ENCODE measurements at regions of chr11 and their contacts with region 1.

Region 1: DNA sequence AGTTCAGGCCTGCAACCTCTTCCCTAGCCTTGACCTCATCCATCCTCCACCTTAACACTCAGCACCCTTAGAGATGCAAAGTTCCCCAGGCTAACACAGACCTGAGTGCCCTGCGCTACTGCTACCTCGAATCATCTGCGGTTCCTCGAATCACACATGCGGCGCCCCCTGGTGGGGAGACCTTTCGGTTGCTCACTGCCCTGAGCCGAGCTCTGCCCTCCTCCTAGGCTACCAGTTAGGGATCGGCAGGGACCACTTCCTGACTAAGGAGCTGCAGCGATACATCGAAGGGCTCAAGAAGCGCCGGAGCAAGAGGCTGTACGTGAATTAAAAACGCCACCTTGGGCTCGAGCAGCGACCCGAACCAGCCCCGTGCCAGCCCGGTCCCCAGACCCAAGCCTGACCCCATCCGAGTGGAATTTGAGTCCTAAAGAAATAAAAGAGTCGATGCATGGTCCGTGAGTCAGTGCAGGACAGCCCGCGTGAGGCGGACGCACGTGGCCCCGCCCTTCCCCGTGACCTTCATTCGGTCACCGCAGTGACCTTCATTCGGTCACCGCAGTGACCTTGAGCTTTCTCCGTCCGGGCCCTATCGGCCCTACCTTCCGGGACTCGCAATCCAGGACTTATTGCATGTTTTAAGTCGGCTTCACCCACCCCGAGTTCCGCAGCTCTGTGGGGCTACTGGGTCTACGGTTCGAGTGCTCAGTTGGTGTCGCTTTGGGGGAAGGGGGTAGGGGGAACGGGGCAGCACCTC is 830 bp upstream of the ESRRA start:
- DNase-seq: peak; percentile 90 to 96 (median 95)
- H3K4me3 ChIP-seq: peak overlapping the region; percentile 53 to 90 (median 79)
- H3K27ac ChIP-seq: peak overlapping the region; percentile 54 to 99 (median 94)
- H3K27me3 ChIP-seq: peaks cover 0 to 3% (median 0%) of the 10 kb centered on the region in 45 donors
- CTCF ChIP-seq: peak; percentile 63 to 97 (median 87)

Region 2: GRCh38 chr11:64088162-64089026 is 216.1 kb before region 1 on chr11:
- intact Hi-C with region 1: no loop called
- DNase-seq: peak in 1 of 10 donors; percentile 62
- H3K4me3 ChIP-seq: peak overlapping the region in 1 of 59 donors; percentile 13
- H3K27ac ChIP-seq: peak overlapping the region in 45 of 59 donors; percentile 4 to 98 (median 68)
- H3K27me3 ChIP-seq: no peaks in the 10 kb centered on the region
- CTCF ChIP-seq: peak in 41 of 56 donors; percentile 8 to 48 (median 29)

Region 3: DNA sequence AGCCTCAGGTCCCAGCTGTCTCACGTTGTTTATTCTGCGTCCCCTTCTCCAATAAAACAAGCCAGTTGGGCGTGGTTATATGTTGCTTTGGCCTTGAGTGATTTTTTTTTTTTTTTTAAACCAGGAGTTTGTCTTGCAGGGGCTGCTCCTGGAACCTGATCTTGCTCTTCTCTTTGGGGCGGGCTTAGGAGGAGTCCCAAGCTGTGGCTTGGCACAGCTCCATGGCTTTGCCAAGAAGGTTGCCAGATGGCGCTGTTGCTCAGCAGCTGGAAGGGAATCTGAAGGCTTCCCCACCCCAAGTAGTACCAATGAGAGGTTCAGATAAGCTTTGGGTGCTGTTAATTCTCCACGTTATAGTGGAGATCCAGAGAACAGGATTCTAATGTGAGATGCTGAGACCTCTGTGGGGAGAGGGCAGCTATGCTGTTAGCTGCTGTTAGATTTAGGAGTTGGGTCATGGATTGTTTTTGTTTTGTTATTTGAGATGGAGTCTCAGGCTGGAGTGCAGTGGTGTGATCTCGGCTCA is 100.0 kb before region 1 on chr11:
- intact Hi-C with region 1: loop called in 1 of 2 experiments (anchors 5 kb)
- DNase-seq: peak; percentile 67 to 92 (median 86)
- H3K4me3 ChIP-seq: peak overlapping the region in 3 of 59 donors; percentile 5 to 23 (median 5)
- H3K27ac ChIP-seq: peak overlapping the region in 35 of 59 donors; percentile 0 to 91 (median 53)
- H3K27me3 ChIP-seq: no peaks in the 10 kb centered on the region
- CTCF ChIP-seq: peak in 55 of 56 donors; percentile 56 to 84 (median 71)

Region 4: DNA sequence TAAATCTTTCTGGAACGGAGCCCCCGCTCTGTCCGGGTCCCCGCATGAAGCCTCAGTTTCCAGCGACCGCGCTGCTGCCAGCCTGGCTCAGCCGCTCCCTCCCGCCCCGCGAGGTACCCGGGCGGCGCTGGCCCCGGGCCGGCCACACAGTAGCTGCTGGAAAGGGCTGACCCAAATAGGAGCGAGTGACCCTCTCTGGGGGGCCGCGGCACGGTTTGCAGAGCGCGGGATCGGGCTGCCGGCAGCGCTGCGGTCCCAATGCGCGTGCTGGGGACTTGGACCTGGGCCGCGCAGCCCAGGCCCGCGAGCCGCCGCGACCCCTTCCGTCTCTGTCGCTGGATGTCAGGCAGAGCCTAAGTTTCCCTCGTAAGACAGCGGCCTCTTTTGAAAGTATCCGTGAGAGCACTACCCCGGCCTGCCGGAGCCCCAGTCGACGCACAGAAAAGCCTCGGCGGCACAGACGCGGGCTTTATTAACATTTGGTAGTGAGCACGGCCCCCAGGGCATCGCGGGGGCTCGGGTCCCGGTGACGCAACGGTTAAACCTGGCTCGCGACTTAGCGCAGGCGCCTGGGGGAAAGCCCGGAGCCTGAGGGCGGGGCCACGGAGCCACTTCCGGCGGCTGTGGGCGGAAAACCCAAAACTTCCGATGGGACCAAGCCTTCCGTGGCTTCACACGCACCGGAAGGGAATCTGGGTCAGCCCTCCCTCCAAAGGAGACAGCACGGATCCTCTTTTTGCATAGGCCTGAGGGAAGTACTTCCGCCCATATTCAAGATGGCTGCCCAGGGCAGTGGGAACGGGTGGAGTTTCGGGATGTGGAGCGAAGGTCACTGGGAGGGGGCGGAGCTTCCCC is 34.9 kb before region 1 on chr11:
- intact Hi-C with region 1: loop called (anchors 1 kb)
- DNase-seq: peak; percentile 97 to 99 (median 99)
- H3K4me3 ChIP-seq: peak overlapping the region; percentile 61 to 99 (median 84)
- H3K27ac ChIP-seq: peak overlapping the region; percentile 83 to 99 (median 98)
- H3K27me3 ChIP-seq: no peaks in the 10 kb centered on the region
- CTCF ChIP-seq: peak in 38 of 56 donors; percentile 6 to 61 (median 35)

Region 5: GRCh38 chr11:64284962-64285884 is 19.3 kb before region 1 on chr11 and contains the start of gene GPR137:
- intact Hi-C with region 1: loop called in 1 of 2 experiments (anchors 2 kb)
- DNase-seq: peak; percentile 75 to 94 (median 86)
- H3K4me3 ChIP-seq: peak within 1 kb of the TSS; percentile 61 to 100 (median 91)
- H3K27ac ChIP-seq: peak within 1 kb of the TSS; percentile 78 to 99 (median 96)
- H3K27me3 ChIP-seq: no peaks in the 10 kb centered on the region
- CTCF ChIP-seq: peak in 18 of 56 donors; percentile 7 to 41 (median 26)
- total RNA-seq, gene GPR137: 60.7 to 140 (median 86.2) TPM

Region 6: DNA sequence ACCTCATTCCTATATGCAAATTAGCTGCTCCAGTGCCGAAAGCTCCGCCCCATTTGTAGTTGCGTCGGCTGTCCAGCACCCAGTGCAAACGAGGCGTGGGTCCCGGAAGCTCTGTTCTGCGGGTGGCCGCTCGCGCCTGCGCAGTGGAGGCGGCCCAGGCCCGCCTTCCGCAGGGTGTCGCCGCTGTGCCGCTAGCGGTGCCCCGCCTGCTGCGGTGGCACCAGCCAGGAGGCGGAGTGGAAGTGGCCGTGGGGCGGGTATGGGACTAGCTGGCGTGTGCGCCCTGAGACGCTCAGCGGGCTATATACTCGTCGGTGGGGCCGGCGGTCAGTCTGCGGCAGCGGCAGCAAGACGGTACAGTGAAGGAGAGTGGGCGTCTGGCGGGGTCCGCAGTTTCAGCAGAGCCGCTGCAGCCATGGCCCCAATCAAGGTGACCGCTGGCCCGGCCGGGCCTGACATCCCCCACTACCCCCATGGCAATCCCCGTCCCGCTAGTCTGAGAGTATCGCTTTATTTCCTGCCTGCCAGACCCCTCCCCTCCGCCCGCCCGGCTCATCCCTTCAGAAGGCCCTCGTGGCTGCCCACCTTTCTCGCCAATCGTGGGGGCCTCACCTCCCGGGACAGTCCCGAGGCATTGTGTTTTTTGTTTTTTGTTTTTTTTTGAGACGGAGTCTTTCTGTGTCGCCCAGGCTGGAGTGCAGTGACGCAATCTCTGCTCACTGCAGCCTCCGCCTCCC is 13.6 kb after region 1 on chr11 and contains the start of gene PRDX5:
- intact Hi-C with region 1: loop called (anchors 1 kb)
- DNase-seq: peak; percentile 93 to 99 (median 97)
- H3K4me3 ChIP-seq: peak within 1 kb of the TSS; percentile 68 to 99 (median 93)
- H3K27ac ChIP-seq: peak within 1 kb of the TSS; percentile 93 to 100 (median 100)
- H3K27me3 ChIP-seq: no peaks in the 10 kb centered on the region
- CTCF ChIP-seq: peak; percentile 11 to 83 (median 69)
- total RNA-seq, gene PRDX5: 101 to 340 (median 208) TPM

Region 7: DNA sequence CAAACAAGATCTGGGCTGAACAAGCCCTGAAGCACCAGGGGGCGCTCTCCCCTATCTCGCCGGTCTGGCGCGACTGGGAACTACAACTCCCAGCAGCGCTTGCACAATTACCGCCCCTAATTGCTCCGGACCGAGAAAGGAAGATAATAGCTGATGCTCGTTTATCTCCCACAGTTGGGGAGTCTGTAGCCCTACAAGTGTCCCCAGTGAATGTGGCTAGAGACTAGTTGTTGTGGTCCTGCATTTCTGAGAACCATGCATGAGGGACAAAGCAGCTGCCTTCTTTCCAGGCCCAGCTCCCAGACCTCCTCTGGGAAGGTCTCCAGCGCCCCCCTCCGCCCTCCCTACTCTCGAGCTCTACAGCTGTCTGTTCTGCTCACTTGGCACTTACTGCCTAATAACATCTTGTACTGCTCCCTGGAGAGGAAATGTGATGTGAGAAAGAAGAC is 384.1 kb after region 1 on chr11:
- intact Hi-C with region 1: no loop called
- DNase-seq: peak; percentile 87 to 95 (median 92)
- H3K4me3 ChIP-seq: peak overlapping the region; percentile 16 to 70 (median 51)
- H3K27ac ChIP-seq: peak overlapping the region; percentile 71 to 100 (median 97)
- H3K27me3 ChIP-seq: no peaks in the 10 kb centered on the region
- CTCF ChIP-seq: peak; percentile 88 to 99 (median 97)